HepG2 (cell line): ENCODE measurements at regions of chr9 and their contacts with region 1.

Region 1: GRCh38 chr9:109903515-109904138 is 123.6 kb downstream of the PALM2AKAP2 start:
- DNase-seq: peak; percentile 71
- ATAC-seq: peak; percentile 77
- H3K4me3 ChIP-seq: no peak overlapping the region
- H3K27ac ChIP-seq: no peak overlapping the region
- H3K4me1 ChIP-seq: peaks cover 47% of the 10 kb centered on the region
- H3K27me3 ChIP-seq: no peaks in the 10 kb centered on the region; a peak in 1 of 5 replicates
- CTCF ChIP-seq: peak; percentile 89
- EP300 ChIP-seq: no peak
- POLR2A ChIP-seq: no peak
- RAD21 ChIP-seq: peak; percentile 82

Region 2: GRCh38 chr9:110143950-110144545 is 240.4 kb after region 1 on chr9:
- CTCF ChIA-PET with region 1: interaction called, 6 read pairs
- POLR2A ChIA-PET with region 1: no interaction called
- in situ Hi-C with region 1: no loop called
- intact Hi-C with region 1: loop called (anchors 2 kb)
- DNase-seq: no peak
- ATAC-seq: no peak
- H3K4me3 ChIP-seq: no peak overlapping the region
- H3K27ac ChIP-seq: no peak overlapping the region
- H3K4me1 ChIP-seq: peaks cover 10% of the 10 kb centered on the region; the same call in 1 of the 2 replicates
- H3K27me3 ChIP-seq: no peaks in the 10 kb centered on the region
- CTCF ChIP-seq: no peak
- EP300 ChIP-seq: no peak
- POLR2A ChIP-seq: no peak
- RAD21 ChIP-seq: no peak